Sigmoid colon (tissue), 7 donors: ENCODE measurements at regions of chr13 and their contacts with region 1.

Region 1: GRCh38 chr13:35720690-35721554 is 244.4 kb upstream of the MAB21L1 start:
- DNase-seq: peak; percentile 74
- H3K4me3 ChIP-seq: peak overlapping the region in 3 of 4 donors; percentile 9 to 31 (median 17)
- H3K27ac ChIP-seq: peak overlapping the region in 3 of 4 donors; percentile 30 to 70 (median 32)
- H3K4me1 ChIP-seq: peaks cover 0 to 54% (median 52%) of the 10 kb centered on the region in 4 donors
- H3K27me3 ChIP-seq: no peaks in the 10 kb centered on the region
- CTCF ChIP-seq: peak; percentile 84 to 95 (median 92)
- EP300 ChIP-seq: no peak
- POLR2A ChIP-seq: no peak

Region 2: GRCh38 chr13:35378939-35379338 is 342.0 kb before region 1 on chr13:
- intact Hi-C with region 1: no loop called
- DNase-seq: no peak
- H3K4me3 ChIP-seq: no peak overlapping the region
- H3K27ac ChIP-seq: no peak overlapping the region
- H3K4me1 ChIP-seq: peaks cover 0 to 13% (median 3%) of the 10 kb centered on the region in 4 donors
- H3K27me3 ChIP-seq: no peaks in the 10 kb centered on the region
- CTCF ChIP-seq: no peak
- EP300 ChIP-seq: no peak
- POLR2A ChIP-seq: no peak

Region 3: GRCh38 chr13:35630551-35631275 is 90.2 kb before region 1 on chr13:
- intact Hi-C with region 1: loop called (anchors 2 kb)
- DNase-seq: no peak
- H3K4me3 ChIP-seq: no peak overlapping the region
- H3K27ac ChIP-seq: no peak overlapping the region
- H3K4me1 ChIP-seq: peaks cover 0 to 4% (median 0%) of the 10 kb centered on the region in 4 donors
- H3K27me3 ChIP-seq: no peaks in the 10 kb centered on the region
- CTCF ChIP-seq: peak; percentile 39 to 70 (median 58)
- EP300 ChIP-seq: no peak
- POLR2A ChIP-seq: no peak

Region 4: GRCh38 chr13:35789335-35790165 is 68.6 kb after region 1 on chr13:
- intact Hi-C with region 1: loop called (anchors 2 kb)
- DNase-seq: no peak
- H3K4me3 ChIP-seq: no peak overlapping the region
- H3K27ac ChIP-seq: no peak overlapping the region
- H3K4me1 ChIP-seq: peaks cover 0 to 48% (median 39%) of the 10 kb centered on the region in 4 donors
- H3K27me3 ChIP-seq: no peaks in the 10 kb centered on the region
- CTCF ChIP-seq: peak in 3 of 4 experiments; percentile 47 to 60 (median 56)
- EP300 ChIP-seq: no peak
- POLR2A ChIP-seq: no peak